Uterus (tissue), 4 donors: ENCODE measurements at regions of chr12 and their contacts with region 1.

Region 1: DNA sequence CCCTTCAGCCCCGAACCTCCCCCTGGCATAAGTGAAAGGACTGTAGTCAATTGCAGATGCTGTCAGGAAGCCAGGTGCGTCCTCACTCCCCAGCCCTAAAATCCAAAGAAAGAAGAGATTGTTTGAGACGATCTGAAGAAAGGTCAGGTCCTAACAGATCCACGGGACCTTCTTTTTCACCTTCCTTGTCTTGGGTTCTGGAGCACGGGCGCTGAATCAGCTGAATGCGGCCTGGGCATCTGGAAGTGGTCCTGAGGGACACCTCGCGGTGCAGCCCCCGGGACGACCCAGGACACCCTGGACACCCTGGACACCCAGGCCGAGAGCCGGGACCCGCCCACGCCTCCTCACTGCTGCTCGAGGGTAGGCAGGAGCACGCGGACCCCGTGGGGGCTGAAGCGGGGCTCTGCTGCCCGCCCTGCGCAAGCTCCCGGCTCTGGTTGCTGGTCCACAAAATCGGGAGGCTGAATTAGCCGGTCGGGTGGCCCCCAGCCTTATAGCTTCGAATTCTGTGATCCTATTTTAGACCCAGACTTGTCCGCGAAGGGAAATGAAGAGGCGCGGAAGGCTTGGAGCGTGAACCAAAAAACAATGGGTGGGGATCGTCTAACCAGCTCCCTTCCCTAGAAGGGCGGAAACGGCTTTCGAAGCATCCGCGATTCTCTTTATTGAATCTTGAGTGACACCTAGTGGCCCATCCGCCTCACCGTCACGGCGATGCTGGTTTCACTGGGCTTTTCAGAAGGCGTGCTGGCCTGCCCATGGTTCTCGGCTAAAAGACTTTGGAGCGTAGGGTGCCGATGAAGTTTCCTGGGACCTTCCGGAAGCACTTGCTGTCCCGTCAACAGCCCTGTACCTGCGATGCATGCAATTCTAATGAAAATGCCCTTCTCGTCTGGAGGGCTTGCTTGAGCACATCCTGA is 46.4 kb upstream of the PLXNC1 start:
- DNase-seq: peak; percentile 86 to 87
- H3K4me3 ChIP-seq: peak overlapping the region; percentile 39 to 46
- H3K27ac ChIP-seq: peak overlapping the region; percentile 56
- H3K4me1 ChIP-seq: no peaks in the 10 kb centered on the region
- H3K27me3 ChIP-seq: no peaks in the 10 kb centered on the region
- CTCF ChIP-seq: peak; percentile 78 to 89 (median 86)
- POLR2A ChIP-seq: no peak

Region 2: DNA sequence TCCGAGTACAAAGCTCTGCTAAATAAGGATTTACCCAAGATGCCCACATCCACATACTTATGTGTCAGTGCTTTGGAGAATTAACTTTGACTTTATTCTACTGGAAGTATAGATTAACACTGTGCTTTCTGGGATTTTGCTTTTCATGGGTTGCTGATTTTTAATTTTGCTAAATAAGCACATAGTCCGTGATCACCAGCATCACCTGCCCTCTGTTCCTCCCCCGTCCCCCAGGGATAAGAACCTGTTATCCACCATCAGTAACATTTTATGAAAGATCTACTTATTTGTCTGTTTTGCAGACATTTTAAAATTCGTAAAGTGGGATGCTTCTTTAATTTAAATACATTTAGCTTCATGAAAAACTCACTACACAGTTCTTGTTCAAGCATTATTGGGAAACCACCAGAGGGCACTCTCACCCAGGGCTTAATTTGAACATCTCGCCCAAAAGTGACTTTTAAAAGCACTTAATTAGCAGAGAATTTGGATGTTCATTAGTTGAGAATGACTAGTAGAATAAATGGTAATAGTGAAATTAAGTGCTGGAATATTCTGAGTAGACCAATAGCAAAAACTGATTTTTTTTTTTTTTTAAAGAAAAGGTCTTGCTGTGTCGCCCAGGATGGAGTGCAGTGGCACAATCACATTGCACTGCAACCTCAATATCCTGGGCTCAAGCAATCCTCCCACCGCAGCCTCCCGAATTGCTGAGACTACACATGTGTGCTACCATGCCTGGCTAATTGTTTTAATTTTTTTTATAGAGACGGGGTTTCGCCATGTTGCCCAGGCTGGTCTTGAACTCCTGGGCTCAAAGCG is 599.0 kb before region 1 on chr12:
- intact Hi-C with region 1: loop called (anchors 5 kb)
- DNase-seq: peak; percentile 36 to 59
- H3K4me3 ChIP-seq: no peak overlapping the region
- H3K27ac ChIP-seq: no peak overlapping the region
- H3K4me1 ChIP-seq: no peaks in the 10 kb centered on the region
- H3K27me3 ChIP-seq: no peaks in the 10 kb centered on the region
- CTCF ChIP-seq: peak; percentile 73 to 84 (median 78)
- POLR2A ChIP-seq: no peak

Region 3: GRCh38 chr12:93778306-93778705 is 323.7 kb before region 1 on chr12:
- intact Hi-C with region 1: loop called (anchors 10 kb)
- DNase-seq: peak; percentile 68 to 81
- H3K4me3 ChIP-seq: no peak overlapping the region
- H3K27ac ChIP-seq: peak overlapping the region; percentile 89 to 92
- H3K4me1 ChIP-seq: peaks cover 0 to 19% of the 10 kb centered on the region in 2 donors
- H3K27me3 ChIP-seq: no peaks in the 10 kb centered on the region
- CTCF ChIP-seq: no peak
- POLR2A ChIP-seq: peak in 1 of 2 donors; percentile 19

Region 4: DNA sequence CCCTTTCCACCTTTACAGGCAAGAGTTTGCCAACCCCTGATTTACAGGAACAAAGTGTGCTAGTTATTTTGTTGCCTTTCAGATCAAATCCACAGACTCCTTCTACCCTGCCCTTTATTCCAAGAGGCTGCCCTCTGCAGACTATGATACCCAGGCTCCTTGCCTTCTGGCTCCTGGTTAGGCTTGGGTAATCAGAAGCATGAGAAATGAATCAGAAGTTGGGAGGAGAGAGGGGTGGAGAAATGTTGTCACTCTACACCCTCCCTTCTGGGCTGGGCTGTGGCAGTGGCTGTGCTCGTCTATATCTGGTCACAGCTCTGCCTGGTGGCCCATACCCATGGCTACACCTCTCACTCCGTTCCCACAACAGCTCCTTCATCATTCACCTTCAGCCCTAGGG is 158.2 kb before region 1 on chr12:
- intact Hi-C with region 1: no loop called
- DNase-seq: no peak
- H3K4me3 ChIP-seq: no peak overlapping the region
- H3K27ac ChIP-seq: no peak overlapping the region
- H3K4me1 ChIP-seq: no peaks in the 10 kb centered on the region
- H3K27me3 ChIP-seq: no peaks in the 10 kb centered on the region
- CTCF ChIP-seq: no peak
- POLR2A ChIP-seq: no peak